Ascending aorta (tissue), 2 donors: ENCODE measurements at regions of chr4 and their contacts with region 1.

Region 1: DNA sequence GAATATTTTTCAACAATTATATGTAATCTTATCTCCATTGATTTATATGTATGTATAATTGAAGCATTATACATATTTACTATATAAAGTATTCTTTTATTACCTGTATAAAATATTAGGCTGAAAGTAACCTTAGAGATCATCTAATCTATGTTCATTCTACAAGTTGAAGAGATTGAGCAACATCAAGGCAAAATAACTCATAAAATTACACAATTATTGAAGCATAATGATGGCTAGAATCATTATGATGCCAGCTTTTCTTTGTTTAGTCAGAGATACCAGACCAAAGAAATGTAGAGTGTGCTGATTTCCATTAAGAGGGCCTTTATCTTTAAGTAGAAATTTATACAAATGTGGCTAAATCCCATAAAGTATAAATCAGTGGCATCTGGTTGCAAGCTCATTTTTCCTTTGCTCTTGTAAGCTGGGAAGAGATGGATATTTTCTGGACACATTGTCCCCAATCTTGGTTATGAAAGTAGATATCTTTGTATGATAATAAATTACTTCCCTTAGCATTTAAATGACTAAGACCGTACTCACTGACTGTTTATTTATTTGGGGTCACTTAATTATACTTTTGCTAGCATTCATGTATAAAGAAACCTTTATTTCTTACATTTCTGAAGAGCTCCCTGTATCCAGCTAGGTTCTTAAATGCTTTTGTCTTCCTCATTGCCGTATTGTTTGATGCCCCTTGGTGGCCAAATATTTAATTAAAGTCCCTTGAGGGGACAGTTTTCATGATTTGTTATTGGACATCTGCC is 339.8 kb downstream of the PCDH7 start:
- DNase-seq: no peak
- H3K4me3 ChIP-seq: no peak overlapping the region
- H3K27ac ChIP-seq: no peak overlapping the region
- H3K4me1 ChIP-seq: peaks cover 0 to 4% of the 10 kb centered on the region in 2 donors
- H3K27me3 ChIP-seq: no peaks in the 10 kb centered on the region
- CTCF ChIP-seq: no peak

Region 2: GRCh38 chr4:30939069-30939468 is 120.9 kb before region 1 on chr4:
- intact Hi-C with region 1: no loop called
- DNase-seq: no peak
- H3K4me3 ChIP-seq: no peak overlapping the region
- H3K27ac ChIP-seq: peak overlapping the region in 1 of 2 donors; percentile 5
- H3K4me1 ChIP-seq: peaks cover 0 to 9% of the 10 kb centered on the region in 2 donors
- H3K27me3 ChIP-seq: no peaks in the 10 kb centered on the region
- CTCF ChIP-seq: no peak

Region 3: GRCh38 chr4:31104577-31104976 is 44.6 kb after region 1 on chr4:
- intact Hi-C with region 1: loop called (anchors 5 kb)
- DNase-seq: no peak
- H3K4me3 ChIP-seq: no peak overlapping the region
- H3K27ac ChIP-seq: peak overlapping the region in 1 of 2 donors; percentile 38
- H3K4me1 ChIP-seq: peaks cover 0 to 21% of the 10 kb centered on the region in 2 donors
- H3K27me3 ChIP-seq: no peaks in the 10 kb centered on the region
- CTCF ChIP-seq: no peak